HAP-1 (cell line): ENCODE measurements at regions of chr10 and their contacts with region 1.

Region 1: GRCh38 chr10:84147347-84147746 is 8.0 kb downstream of the GHITM start:
- DNase-seq: no peak
- H3K4me3 ChIP-seq: no peak overlapping the region
- H3K4me1 ChIP-seq: no peaks in the 10 kb centered on the region
- H3K27me3 ChIP-seq: no peaks in the 10 kb centered on the region

Region 2: GRCh38 chr10:84205049-84205852 is 57.9 kb after region 1 on chr10:
- in situ Hi-C with region 1: loop called (anchors 5 kb)
- DNase-seq: peak; percentile 26 to 84
- H3K4me3 ChIP-seq: no peak overlapping the region
- H3K4me1 ChIP-seq: no peaks in the 10 kb centered on the region
- H3K27me3 ChIP-seq: no peaks in the 10 kb centered on the region

Region 3: GRCh38 chr10:84360637-84361365 is 213.5 kb after region 1 on chr10:
- in situ Hi-C with region 1: no loop called
- DNase-seq: no peak
- H3K4me3 ChIP-seq: no peak overlapping the region
- H3K4me1 ChIP-seq: peaks cover 18% of the 10 kb centered on the region; the same call in 1 of the 2 replicates
- H3K27me3 ChIP-seq: no peaks in the 10 kb centered on the region

Region 4: GRCh38 chr10:84401854-84402611 is 254.7 kb after region 1 on chr10:
- in situ Hi-C with region 1: no loop called
- DNase-seq: peak; percentile 73 to 85
- H3K4me3 ChIP-seq: no peak overlapping the region
- H3K4me1 ChIP-seq: peaks cover 12% of the 10 kb centered on the region
- H3K27me3 ChIP-seq: no peaks in the 10 kb centered on the region